ENCODE measurements at regions of chr4 and their contacts with region 1.

Region 1: DNA sequence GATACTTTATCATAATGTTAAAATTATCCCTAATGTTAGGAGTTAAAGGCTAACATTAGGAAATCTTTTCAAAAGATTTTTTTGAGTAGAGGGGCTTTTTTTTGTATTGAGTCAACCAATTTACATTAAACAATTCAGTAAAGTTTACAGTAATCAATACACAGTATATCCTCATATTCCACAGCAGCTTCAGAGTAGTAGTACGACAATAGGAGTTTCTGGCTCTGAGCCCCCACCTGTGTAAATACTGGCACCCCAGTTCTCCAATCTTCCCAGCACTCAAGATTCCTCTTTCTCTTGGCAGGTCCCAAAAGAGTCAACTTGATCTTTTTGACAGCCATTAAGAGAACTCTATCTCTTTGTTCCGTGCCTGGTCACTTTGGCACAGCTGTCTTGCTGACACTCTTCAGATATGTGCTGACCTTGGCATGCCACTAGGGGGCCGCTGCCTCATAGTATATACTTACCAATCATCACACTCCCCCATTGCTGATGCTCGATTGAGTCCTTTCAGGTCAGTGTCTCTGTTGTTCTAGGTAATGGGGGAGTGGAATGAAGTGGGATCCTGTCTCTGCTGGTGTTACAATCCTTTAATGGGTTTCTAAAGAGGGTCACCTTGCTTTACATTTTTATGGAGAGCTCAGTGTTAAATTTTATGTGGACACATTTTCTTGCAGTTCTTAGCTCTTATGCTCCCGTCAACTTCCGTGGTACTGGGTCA is 19.5 kb upstream of the CCNI start:
- DNase-seq: peak; percentile 38 to 79
- H3K4me3 ChIP-seq: no peak overlapping the region
- H3K27ac ChIP-seq: no peak overlapping the region
- H3K4me1 ChIP-seq: no peaks in the 10 kb centered on the region
- H3K27me3 ChIP-seq: no peaks in the 10 kb centered on the region
- CTCF ChIP-seq: peak; percentile 70 to 94 (median 76)
- EP300 ChIP-seq: no peak
- POLR2A ChIP-seq: no peak
- RAD21 ChIP-seq: peak; percentile 75 to 80

Region 2: DNA sequence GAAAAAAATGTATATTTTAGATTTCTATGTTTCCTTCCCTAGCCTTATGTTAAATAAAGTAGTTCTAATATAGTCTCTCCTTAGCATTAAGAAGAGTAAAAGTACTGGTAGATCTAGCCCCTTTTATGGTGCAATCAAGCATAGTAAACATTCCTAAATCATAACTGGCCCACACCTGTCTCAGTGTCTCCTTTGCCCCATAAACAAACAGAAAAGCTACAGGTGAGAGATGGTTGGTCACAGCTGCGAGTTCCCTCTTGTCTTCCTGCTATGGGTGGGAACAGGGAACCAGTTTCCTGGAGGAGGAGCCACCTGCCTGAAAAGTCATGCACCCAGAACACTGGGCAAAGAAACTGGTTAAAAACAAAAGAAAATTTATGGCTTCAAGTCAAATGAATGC is 213.9 kb before region 1 on chr4:
- CTCF ChIA-PET with region 1: no interaction called
- POLR2A ChIA-PET with region 1: no interaction called
- DNase-seq: no peak
- H3K4me3 ChIP-seq: no peak overlapping the region
- H3K27ac ChIP-seq: no peak overlapping the region
- H3K4me1 ChIP-seq: peaks cover 0 to 4% (median 1%) of the 10 kb centered on the region in 4 experiments; a peak in 3 of 7 replicates
- H3K27me3 ChIP-seq: no peaks in the 10 kb centered on the region
- CTCF ChIP-seq: no peak
- EP300 ChIP-seq: no peak
- POLR2A ChIP-seq: no peak
- RAD21 ChIP-seq: peak in 1 of 2 experiments; percentile 9; a peak in 1 of 4 replicates

Region 3: GRCh38 chr4:76960014-76960413 is 135.2 kb before region 1 on chr4:
- CTCF ChIA-PET with region 1: no interaction called
- POLR2A ChIA-PET with region 1: no interaction called
- DNase-seq: no peak
- H3K4me3 ChIP-seq: no peak overlapping the region
- H3K27ac ChIP-seq: no peak overlapping the region
- H3K4me1 ChIP-seq: no peaks in the 10 kb centered on the region
- H3K27me3 ChIP-seq: no peaks in the 10 kb centered on the region
- CTCF ChIP-seq: no peak
- EP300 ChIP-seq: no peak
- POLR2A ChIP-seq: no peak
- RAD21 ChIP-seq: no peak

Region 4: DNA sequence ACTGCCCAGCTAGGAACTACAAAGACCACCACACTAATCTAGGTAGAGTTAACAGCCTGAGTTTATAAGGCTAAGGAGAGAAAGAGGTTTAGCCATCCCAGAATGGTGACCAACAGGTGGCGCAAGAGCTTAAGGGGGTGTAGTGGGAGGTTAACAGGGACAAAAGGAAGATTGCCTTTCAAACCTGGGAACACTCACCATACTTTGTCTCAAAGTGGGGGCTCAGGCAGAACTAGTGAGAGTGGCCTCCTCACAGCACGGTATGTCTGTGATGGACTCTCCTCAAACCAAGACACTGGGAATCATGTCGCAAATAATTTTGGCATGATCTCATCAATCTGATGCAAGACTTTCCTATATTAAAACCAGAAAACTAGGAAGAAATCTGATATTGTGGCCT is 42.9 kb before region 1 on chr4:
- CTCF ChIA-PET with region 1: interaction called, 19 read pairs
- POLR2A ChIA-PET with region 1: no interaction called
- DNase-seq: peak in 1 of 2 experiments; percentile 89
- H3K4me3 ChIP-seq: no peak overlapping the region
- H3K27ac ChIP-seq: 0 out of 2 replicates have a peak overlapping the region, but pooled peaks have one; percentile 37
- H3K4me1 ChIP-seq: no peaks in the 10 kb centered on the region; a peak in 1 of 7 replicates
- H3K27me3 ChIP-seq: no peaks in the 10 kb centered on the region
- CTCF ChIP-seq: peak; percentile 61 to 92 (median 81)
- EP300 ChIP-seq: no peak
- POLR2A ChIP-seq: no peak
- RAD21 ChIP-seq: peak; percentile 76 to 82

Region 5: DNA sequence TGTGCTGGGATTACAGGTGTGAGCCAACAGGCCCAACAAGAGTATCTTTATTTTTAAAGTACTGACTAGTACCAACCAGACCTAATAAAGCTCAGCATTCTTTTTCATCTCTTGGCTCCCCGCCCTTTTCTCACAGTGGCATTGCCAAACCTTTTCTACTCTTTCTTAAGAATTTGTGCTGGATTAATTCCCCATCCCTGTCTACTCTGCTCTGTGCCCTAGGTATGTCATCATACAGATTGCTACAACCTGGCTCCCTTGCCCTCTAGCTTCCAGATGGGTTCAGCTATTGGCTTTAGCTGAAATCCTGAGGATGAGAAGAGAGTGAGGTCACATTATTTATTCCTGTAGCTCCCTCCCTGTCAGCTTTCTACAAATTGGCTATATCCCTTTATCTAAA is 15.5 kb after region 1 on chr4:
- CTCF ChIA-PET with region 1: interaction called, 21 read pairs
- POLR2A ChIA-PET with region 1: no interaction called
- DNase-seq: no peak
- H3K4me3 ChIP-seq: no peak overlapping the region
- H3K27ac ChIP-seq: no peak overlapping the region
- H3K4me1 ChIP-seq: no peaks in the 10 kb centered on the region
- H3K27me3 ChIP-seq: no peaks in the 10 kb centered on the region
- CTCF ChIP-seq: no peak
- EP300 ChIP-seq: no peak
- POLR2A ChIP-seq: no peak
- RAD21 ChIP-seq: no peak

Region 6: DNA sequence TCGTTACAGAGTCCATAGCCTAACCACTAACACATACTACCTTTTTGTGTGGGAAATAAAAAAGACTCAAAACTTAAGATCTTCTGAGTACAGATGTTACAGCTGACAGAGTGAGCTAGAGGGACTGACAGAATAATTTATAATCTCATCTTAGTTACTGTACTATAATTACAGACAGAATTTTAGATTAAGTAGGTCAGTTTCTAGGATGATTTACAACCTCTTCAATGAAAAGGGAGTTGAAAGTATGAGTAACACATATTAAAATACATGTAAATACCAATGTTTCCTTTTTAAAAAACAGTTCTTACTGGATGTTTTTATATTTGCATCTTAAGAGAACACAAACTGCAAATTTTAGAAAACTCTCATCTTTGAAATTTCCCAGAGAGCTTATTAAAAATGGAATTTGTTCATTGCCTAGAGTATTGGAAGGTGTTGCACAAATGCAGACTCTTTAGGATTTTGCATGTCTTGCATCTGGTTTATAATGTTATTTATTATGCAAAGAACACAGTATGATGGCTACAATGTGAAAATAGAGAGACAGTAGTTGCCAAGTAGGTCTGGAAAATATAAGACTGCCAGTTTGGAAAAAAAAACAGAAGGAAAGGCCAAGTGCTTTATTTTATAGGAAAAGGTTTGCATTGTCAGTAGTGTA is 37.5 kb after region 1 on chr4:
- CTCF ChIA-PET with region 1: interaction called, 17 read pairs
- POLR2A ChIA-PET with region 1: no interaction called
- DNase-seq: no peak
- H3K4me3 ChIP-seq: no peak overlapping the region
- H3K27ac ChIP-seq: no peak overlapping the region
- H3K4me1 ChIP-seq: peaks cover 0 to 5% (median 0%) of the 10 kb centered on the region in 4 experiments; a peak in 2 of 7 replicates
- H3K27me3 ChIP-seq: no peaks in the 10 kb centered on the region
- CTCF ChIP-seq: no peak
- EP300 ChIP-seq: no peak
- POLR2A ChIP-seq: no peak
- RAD21 ChIP-seq: no peak

Region 7: GRCh38 chr4:77156533-77156911 is 61.3 kb after region 1 on chr4:
- CTCF ChIA-PET with region 1: interaction called, 10 read pairs
- POLR2A ChIA-PET with region 1: interaction called, 7 read pairs
- DNase-seq: peak; percentile 89 to 99
- H3K4me3 ChIP-seq: peak overlapping the region; percentile 76 to 94 (median 92)
- H3K27ac ChIP-seq: peak overlapping the region; percentile 100
- H3K4me1 ChIP-seq: peaks cover 0 to 6% (median 2%) of the 10 kb centered on the region in 4 experiments; a peak in 4 of 7 replicates
- H3K27me3 ChIP-seq: no peaks in the 10 kb centered on the region
- CTCF ChIP-seq: no peak
- EP300 ChIP-seq: no peak
- POLR2A ChIP-seq: no peak; a peak in 1 of 3 replicates
- RAD21 ChIP-seq: no peak

Region 8: GRCh38 chr4:77600521-77601451 is 505.5 kb after region 1 on chr4:
- CTCF ChIA-PET with region 1: no interaction called
- POLR2A ChIA-PET with region 1: no interaction called
- DNase-seq: no peak
- H3K4me3 ChIP-seq: no peak overlapping the region
- H3K27ac ChIP-seq: no peak overlapping the region
- H3K4me1 ChIP-seq: no peaks in the 10 kb centered on the region
- H3K27me3 ChIP-seq: no peaks in the 10 kb centered on the region; a peak in 1 of 7 replicates
- CTCF ChIP-seq: peak; percentile 10 to 88 (median 80)
- EP300 ChIP-seq: no peak
- POLR2A ChIP-seq: no peak
- RAD21 ChIP-seq: peak; percentile 69 to 77

Measured in H1 (cell line).